Heart left ventricle (tissue), 16 donors: ENCODE measurements at regions of chrX and their contacts with region 1.

Region 1: GRCh38 chrX:2584251-2585157 is 83.7 kb upstream of the DHRSX start:
- DNase-seq: no peak
- ATAC-seq: no peak
- H3K4me3 ChIP-seq: peak overlapping the region in 1 of 12 donors; percentile 35
- H3K27ac ChIP-seq: no peak overlapping the region
- H3K4me1 ChIP-seq: peaks cover 0 to 19% (median 4%) of the 10 kb centered on the region in 12 donors
- H3K27me3 ChIP-seq: peaks cover 9 to 45% (median 30%) of the 10 kb centered on the region in 9 donors
- CTCF ChIP-seq: no peak
- POLR2A ChIP-seq: no peak

Region 2: DNA sequence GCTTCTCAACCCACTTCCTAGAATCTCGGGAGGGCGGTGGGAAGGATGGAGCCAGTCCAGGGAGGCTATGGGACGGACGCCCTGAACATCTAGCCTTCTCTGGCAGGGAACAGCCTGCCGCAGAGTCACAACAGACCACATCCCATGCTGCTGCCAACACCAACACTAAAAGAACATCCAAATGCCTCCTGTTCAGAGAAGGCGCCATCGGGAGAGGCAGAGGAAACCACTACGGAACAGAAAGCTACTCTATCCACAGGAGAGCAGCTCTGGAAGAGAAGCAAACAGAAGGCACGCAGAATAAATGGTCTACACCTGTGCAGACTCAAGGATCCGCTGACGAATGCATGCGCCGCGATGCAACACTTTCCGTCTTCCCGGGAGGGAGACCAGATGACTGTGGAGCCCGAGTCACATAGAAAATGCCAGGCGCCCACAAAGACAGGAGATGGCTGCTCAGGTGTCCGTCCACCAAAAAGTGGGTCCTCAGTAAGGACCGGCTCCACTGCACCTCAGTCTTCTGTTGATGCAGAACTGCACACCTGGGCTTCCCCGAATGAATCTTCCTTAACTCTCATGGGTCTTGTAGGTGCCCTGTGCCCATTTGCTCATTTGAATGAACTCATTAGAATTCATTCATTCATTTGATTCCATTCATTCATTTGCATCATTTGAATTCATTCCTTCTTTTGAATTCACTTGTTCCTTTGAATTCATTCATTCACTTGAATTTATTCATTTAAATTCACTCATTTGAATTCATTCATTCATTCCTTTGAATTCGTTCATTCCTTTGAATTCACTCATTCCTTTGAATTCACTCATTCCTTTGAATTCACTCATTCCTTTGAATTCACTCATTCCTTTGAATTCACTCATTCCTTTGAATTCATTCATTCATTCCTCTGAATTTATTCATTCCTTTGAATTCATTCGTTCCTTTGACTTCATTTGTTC is 301.1 kb before region 1 on chrX:
- intact Hi-C with region 1: loop called in 1 of 10 experiments (anchors 10 kb)
- DNase-seq: no peak
- ATAC-seq: no peak
- H3K4me3 ChIP-seq: no peak overlapping the region
- H3K27ac ChIP-seq: no peak overlapping the region
- H3K4me1 ChIP-seq: no peaks in the 10 kb centered on the region
- H3K27me3 ChIP-seq: no peaks in the 10 kb centered on the region
- CTCF ChIP-seq: no peak
- POLR2A ChIP-seq: no peak